Cardiac septum (tissue), 1 donor: ENCODE measurements at regions of chr17 and their contacts with region 1.

Region 1: DNA sequence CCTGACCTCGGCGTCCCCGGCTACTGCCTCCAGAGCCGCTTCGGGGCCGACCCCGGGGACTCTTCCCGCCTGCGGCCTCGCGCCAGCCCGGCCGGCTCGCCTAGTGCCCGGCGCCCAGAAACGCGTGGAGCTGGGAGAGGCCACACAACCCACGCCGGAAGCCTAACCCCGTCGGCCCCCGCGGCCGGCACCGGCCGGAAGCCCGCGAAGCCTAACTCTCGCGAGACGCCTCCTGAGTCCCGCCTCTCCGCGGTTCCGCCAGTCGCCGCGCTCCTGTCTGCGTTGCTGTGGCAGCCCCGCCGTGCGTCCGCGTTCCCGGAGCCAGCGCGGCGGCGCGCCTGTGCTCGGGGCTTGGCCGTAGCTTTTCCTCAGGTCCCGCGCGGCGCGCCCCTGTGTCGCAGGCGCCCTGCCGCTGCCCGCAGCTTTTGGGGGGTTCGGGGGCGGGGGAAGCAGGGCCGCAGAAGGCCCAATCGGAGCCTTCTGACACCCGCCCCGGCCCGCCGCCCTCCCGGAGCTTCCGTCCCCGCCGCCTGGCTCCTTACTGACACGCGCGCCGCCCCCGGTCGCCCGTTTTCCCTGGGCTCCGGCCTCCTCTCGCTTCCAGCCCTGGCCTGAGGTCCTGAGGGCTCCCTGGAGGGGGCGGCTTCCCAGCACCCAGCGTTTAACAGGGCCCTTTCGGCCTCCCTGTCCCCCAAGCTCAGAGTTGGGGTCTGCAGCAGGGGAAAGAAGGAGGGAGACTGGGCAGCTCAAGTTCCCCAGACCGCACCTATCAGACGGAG is 21.7 kb downstream of the NPTX1 start:
- DNase-seq: peak; percentile 97

Region 2: DNA sequence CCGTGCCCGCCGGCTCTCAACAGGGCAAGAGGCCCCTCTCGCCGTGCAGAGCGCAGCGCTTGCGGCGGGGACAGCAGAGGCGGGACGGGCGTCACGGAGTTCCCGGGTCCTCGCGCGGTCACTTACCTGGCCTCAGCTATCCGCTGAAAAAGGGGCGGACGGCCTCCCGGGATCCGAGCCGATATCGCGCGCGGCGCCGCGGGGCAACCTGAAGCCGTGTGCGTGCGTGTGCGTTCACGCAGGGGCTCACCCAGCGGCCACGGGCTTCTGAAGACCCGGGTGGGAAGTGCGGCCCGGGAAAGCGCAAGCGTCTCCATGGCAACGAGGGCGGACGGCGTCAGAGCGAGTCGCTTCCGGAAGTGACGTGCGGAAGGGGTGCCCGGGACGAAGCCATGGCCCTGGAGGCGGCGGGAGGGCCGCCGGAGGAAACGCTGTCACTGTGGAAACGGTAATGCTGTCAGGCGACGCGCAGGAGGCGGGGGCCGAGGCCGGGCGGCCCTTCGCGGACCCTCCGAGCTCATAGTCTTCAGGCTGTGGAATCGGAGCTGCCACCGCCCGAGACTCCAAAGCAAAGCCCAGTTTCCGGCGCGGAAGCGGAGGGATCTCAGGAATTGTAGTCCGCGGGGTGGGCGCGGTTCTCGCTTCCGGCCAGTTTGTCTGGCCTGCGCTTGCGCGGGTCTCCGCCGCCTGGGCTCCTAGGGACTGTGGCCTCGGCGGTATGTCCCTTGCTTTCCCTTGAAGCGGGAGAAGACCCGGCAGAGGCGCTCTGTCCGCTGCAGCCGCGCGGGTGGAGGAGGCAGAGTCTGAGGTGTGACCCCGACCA is 39.7 kb before region 1 on chr17 and contains the start of gene ENDOV:
- intact Hi-C with region 1: loop called (anchors 1 kb)
- DNase-seq: peak; percentile 97
- total RNA-seq, gene ENDOV: 12.8 TPM

Region 3: GRCh38 chr17:80424878-80425697 is 29.7 kb before region 1 on chr17:
- intact Hi-C with region 1: no loop called
- DNase-seq: no peak

Region 4: GRCh38 chr17:80498242-80498919 is 43.6 kb after region 1 on chr17:
- intact Hi-C with region 1: no loop called
- DNase-seq: no peak

Region 5: DNA sequence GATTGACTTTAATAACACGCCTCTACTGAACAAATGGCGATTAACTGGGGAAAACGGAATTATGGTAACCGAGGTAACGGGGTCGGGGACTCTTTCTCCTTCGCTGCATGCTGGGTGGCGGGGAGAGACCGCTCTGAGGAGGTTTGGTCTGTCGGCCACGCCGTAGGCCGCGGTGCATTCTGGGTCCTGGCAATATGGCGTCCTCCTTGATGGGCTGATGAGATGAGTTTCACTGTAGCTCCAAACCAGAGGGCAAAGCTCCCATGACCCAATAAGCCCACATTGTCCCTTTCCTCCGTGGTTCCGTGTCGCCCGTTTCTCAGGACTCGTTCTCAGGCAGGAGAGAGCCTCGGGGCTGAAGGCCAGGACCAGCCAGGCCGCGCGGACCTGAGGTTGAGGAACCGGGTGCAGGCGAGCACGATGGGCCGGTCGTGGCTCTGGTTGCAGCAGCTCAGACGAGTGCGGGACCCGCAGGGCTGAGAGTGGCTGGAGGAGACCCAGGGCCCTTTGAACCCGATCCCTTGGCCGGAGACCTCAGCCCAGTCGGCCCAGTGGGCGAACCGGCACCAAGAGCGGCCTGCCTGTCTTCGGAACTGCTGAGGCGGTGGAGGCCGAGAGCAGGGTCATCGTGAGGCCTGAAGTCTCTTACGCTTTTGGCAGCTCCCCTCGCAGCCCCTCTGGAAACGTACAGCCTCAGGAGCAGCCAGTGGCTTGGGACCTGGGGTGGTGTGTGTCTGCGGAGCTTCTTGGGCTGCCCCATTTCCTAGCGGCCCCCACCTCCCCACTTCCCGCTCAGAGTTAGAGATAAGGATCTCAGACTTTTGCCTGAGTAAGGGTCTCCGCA is 90.1 kb after region 1 on chr17 and contains the start of gene RPTOR:
- intact Hi-C with region 1: loop called (anchors 2 kb)
- DNase-seq: peak; percentile 97
- total RNA-seq, gene RPTOR: 32.3 TPM

Region 6: DNA sequence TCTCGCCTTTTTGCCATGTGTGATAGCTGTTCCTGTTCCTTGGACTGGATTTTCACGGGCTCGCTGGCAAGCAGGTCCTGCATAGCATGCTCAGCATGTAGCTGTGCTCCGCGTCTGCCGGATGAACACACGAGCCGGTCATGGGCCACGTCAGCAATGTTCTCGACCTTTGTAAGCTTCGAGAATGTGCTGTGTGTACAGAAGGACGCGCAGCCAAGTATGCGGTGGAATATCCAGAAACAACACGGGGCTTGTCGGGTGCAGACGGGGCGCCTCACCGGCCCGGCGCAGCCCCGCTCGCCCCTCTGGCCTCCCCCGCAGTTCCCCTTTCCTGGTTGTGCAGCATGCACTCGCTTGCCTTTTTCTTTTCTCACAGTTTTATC is 132.1 kb after region 1 on chr17:
- intact Hi-C with region 1: no loop called
- DNase-seq: no peak

Region 7: GRCh38 chr17:80866147-80866793 is 411.5 kb after region 1 on chr17:
- intact Hi-C with region 1: loop called (anchors 10 kb)
- DNase-seq: no peak